ENCODE measurements at regions of chr18 and their contacts with region 1.

Region 1: GRCh38 chr18:3245853-3246634 is 1.6 kb upstream of the MYL12A start:
- DNase-seq: no peak
- H3K4me3 ChIP-seq: peak overlapping the region; percentile 38
- H3K27ac ChIP-seq: no peak overlapping the region
- H3K27me3 ChIP-seq: no peaks in the 10 kb centered on the region
- CTCF ChIP-seq: peak; percentile 91

Region 2: GRCh38 chr18:2932247-2933181 is 313.5 kb before region 1 on chr18:
- CTCF ChIA-PET with region 1: interaction called, 52 read pairs
- POLR2A ChIA-PET with region 1: interaction called, 3 read pairs
- DNase-seq: peak; percentile 21
- H3K4me3 ChIP-seq: no peak overlapping the region
- H3K27ac ChIP-seq: no peak overlapping the region
- H3K27me3 ChIP-seq: no peaks in the 10 kb centered on the region
- CTCF ChIP-seq: peak; percentile 64

Region 3: GRCh38 chr18:3261371-3262246 is 15.6 kb after region 1 on chr18 and contains the start of gene MYL12B:
- CTCF ChIA-PET with region 1: no interaction called
- POLR2A ChIA-PET with region 1: interaction called, 14 read pairs
- DNase-seq: no peak
- H3K4me3 ChIP-seq: peak within 1 kb of the TSS; percentile 93
- H3K27ac ChIP-seq: peak within 1 kb of the TSS; percentile 95
- H3K27me3 ChIP-seq: no peaks in the 10 kb centered on the region
- CTCF ChIP-seq: 0 out of 2 replicates have a peak, but pooled peaks have one; percentile 2
- polyA plus RNA-seq, gene MYL12B: 682 and 787 TPM in 2 replicates

Measured in AG04450 (cell line).